ENCODE measurements at regions of chr1 and their contacts with region 1.

Region 1: DNA sequence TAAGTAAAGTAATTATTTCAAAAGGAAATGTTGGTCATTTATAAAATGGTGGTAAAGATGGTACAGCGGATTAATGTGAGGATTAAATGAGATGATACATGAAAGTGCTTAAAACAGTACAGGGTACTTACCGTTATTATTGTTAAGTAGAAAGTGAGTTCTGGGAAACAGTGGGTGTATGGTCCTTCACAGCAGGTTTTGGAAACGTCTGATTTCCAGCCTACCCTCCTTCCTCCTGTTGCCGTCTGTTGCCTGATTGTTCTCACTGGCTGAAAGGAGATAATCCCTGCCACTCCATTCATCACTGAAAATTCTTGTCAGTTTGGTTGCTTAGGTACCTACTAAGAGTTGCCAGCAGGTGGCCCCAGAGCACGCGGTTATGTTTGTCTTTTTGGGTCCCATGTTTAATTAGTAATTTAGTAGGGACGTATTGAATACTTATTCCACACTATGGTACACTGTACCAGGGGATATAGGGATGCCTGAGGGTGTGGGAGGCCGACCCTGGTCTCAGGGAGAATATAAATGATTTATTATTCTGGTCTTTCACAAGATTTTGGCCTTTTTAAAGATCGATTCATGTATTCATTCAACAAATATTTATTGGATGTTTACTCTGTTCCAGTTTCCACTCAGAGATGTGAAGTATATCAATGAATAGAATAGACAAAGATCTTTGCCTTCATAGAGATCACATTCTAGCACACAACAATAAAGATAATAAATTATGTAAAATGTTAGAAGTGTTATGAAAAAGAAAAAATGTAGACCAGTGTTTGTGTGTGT is 30.8 kb upstream of the RPTN start:
- DNase-seq: peak; percentile 85
- ATAC-seq: peak; percentile 76
- H3K4me3 Mint-ChIP-seq: peak overlapping the region; percentile 66
- H3K27ac Mint-ChIP-seq: peak overlapping the region; percentile 43
- H3K4me1 Mint-ChIP-seq: peaks cover 6% of the 10 kb centered on the region
- H3K27me3 Mint-ChIP-seq: no peaks in the 10 kb centered on the region
- CTCF ChIP-seq: peak; percentile 87

Region 2: DNA sequence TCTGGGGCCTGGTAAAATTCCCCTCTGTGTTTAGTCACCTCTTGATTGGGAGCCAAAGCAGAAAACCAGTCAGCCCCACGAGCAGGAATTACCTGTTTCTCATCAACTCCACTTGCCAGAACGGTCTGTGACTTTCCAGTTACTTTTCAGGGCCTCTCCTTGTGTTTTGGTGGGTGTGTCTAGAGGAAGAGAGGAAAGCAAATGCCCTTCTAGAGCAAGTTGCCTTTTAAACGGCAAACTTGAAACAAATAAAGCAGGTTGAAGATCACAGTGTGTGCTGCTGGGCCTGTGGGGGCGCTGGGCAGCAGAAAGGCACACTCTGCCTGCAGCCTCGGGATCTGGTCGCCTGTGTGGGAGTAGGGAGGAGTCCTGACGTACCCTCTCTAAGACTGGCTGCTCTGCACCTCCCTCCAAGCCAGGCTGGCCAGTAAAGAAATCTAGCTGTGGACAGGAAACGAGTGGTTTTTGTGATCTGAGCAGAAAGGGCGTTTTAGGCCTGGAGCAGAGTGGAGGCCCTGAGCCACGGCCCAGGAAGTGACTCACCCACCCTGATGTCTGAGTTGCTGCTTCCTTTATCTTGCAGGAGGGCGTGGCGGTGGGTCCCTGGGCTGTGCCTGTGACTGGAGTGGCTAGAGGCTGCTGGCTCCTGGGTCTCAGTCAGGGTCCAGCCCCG is 142.0 kb before region 1 on chr1:
- CTCF ChIA-PET with region 1: interaction called, 315 read pairs
- POLR2A ChIA-PET with region 1: no interaction called
- intact Hi-C with region 1: loop called (anchors 2 kb)
- DNase-seq: peak; percentile 96
- ATAC-seq: peak; percentile 95
- H3K4me3 Mint-ChIP-seq: peak overlapping the region; percentile 78
- H3K27ac Mint-ChIP-seq: peak overlapping the region; percentile 98
- H3K4me1 Mint-ChIP-seq: peaks cover 17% of the 10 kb centered on the region
- H3K27me3 Mint-ChIP-seq: peaks cover 1% of the 10 kb centered on the region
- CTCF ChIP-seq: peak; percentile 69

Region 3: GRCh38 chr1:152110860-152111514 is 78.9 kb before region 1 on chr1:
- CTCF ChIA-PET with region 1: interaction called, 82 read pairs
- POLR2A ChIA-PET with region 1: no interaction called
- intact Hi-C with region 1: no loop called
- DNase-seq: peak; percentile 43
- ATAC-seq: peak; percentile 66
- H3K4me3 Mint-ChIP-seq: no peak overlapping the region
- H3K27ac Mint-ChIP-seq: no peak overlapping the region
- H3K4me1 Mint-ChIP-seq: peaks cover 4% of the 10 kb centered on the region
- H3K27me3 Mint-ChIP-seq: peaks cover 19% of the 10 kb centered on the region
- CTCF ChIP-seq: no peak

Region 4: GRCh38 chr1:152168520-152168868 is 21.4 kb before region 1 on chr1:
- CTCF ChIA-PET with region 1: interaction called, 11 read pairs
- POLR2A ChIA-PET with region 1: no interaction called
- intact Hi-C with region 1: no loop called
- DNase-seq: no peak
- ATAC-seq: no peak
- H3K4me3 Mint-ChIP-seq: no peak overlapping the region
- H3K27ac Mint-ChIP-seq: no peak overlapping the region
- H3K4me1 Mint-ChIP-seq: peaks cover 8% of the 10 kb centered on the region
- H3K27me3 Mint-ChIP-seq: peaks cover 4% of the 10 kb centered on the region
- CTCF ChIP-seq: no peak

Region 5: GRCh38 chr1:152347116-152347728 is 157.4 kb after region 1 on chr1:
- CTCF ChIA-PET with region 1: interaction called, 10 read pairs
- POLR2A ChIA-PET with region 1: no interaction called
- intact Hi-C with region 1: loop called (anchors 5 kb)
- DNase-seq: peak; percentile 63
- ATAC-seq: peak; percentile 79
- H3K4me3 Mint-ChIP-seq: no peak overlapping the region
- H3K27ac Mint-ChIP-seq: no peak overlapping the region
- H3K4me1 Mint-ChIP-seq: peaks cover 7% of the 10 kb centered on the region
- H3K27me3 Mint-ChIP-seq: peaks cover 22% of the 10 kb centered on the region
- CTCF ChIP-seq: peak; percentile 94